ENCODE measurements at regions of chr13 and their contacts with region 1.

Region 1: DNA sequence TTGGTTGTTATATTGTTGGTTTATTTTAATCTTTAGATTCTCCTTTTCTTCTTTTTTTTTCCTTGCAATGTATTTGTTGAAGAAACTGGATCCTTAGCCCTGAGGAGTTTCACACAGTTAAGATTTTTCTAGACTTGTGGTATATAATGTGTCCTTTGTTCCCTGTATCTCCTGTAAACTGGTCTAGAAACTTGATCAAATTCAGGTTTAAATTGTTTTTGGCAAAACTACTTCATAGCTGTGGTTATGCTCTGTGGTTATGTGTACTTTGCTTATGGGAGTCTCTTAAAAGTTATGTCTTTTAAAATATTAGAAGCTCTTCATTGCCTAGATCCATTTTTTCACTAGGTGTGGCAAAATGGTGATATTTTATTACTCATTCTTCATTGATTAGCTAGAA is 3.7 kb upstream of the MTRF1 start:
- DNase-seq: no peak
- ATAC-seq: no peak
- H3K4me3 ChIP-seq: no peak overlapping the region
- H3K4me1 ChIP-seq: no peaks in the 10 kb centered on the region
- CTCF ChIP-seq: no peak

Region 2: GRCh38 chr13:41295973-41296372 is 28.9 kb after region 1 on chr13:
- intact Hi-C with region 1: loop called in 1 of 2 experiments (anchors 2 kb)
- DNase-seq: no peak
- ATAC-seq: no peak
- H3K4me3 ChIP-seq: no peak overlapping the region
- H3K4me1 ChIP-seq: no peaks in the 10 kb centered on the region
- CTCF ChIP-seq: no peak